ENCODE measurements at regions of chr7 and their contacts with region 1.

Region 1: DNA sequence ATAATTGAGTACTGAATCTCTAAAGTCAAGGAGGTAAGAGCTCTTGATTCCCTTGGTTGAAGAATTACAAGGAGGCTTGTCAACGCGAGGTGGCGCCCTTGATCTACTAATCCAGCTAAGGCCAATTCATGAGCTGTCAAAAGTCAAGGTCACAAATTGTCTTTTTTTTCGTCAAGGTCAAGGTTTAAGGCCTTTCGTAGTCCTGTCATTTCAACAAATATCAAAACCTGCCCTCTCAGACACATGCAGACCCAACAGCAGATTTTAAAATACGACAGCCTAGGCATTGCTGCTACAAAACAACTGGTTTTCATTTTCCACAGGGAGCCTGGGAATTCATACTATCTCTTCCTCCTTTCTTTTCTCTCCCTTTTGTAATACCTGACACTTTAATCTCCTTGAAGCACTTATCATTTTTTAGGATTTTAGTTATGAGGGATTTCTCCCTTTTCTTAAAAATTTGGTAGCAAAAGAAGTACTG is 3.6 kb downstream of the HOXA13 start:
- DNase-seq: peak; percentile 84
- H3K4me3 ChIP-seq: no peak overlapping the region
- H3K27ac ChIP-seq: no peak overlapping the region
- H3K4me1 ChIP-seq: peaks cover 16% of the 10 kb centered on the region
- H3K27me3 ChIP-seq: peaks cover 52 to 78% of the 10 kb centered on the region in 2 experiments
- CTCF ChIP-seq: peak; percentile 66 to 68
- POLR2A ChIP-seq: no peak

Region 2: GRCh38 chr7:27277619-27278018 is 81.3 kb after region 1 on chr7:
- CTCF ChIA-PET with region 1: no interaction called
- POLR2A ChIA-PET with region 1: no interaction called
- dilution Hi-C with region 1: no loop called
- intact Hi-C with region 1: no loop called
- DNase-seq: no peak
- H3K4me3 ChIP-seq: no peak overlapping the region
- H3K27ac ChIP-seq: no peak overlapping the region
- H3K4me1 ChIP-seq: no peaks in the 10 kb centered on the region
- H3K27me3 ChIP-seq: peaks cover 0 to 3% of the 10 kb centered on the region in 2 experiments
- CTCF ChIP-seq: no peak
- POLR2A ChIP-seq: no peak

Region 3: GRCh38 chr7:27303026-27303425 is 106.7 kb after region 1 on chr7:
- CTCF ChIA-PET with region 1: no interaction called
- POLR2A ChIA-PET with region 1: no interaction called
- dilution Hi-C with region 1: no loop called
- intact Hi-C with region 1: no loop called
- DNase-seq: no peak
- H3K4me3 ChIP-seq: no peak overlapping the region
- H3K27ac ChIP-seq: no peak overlapping the region
- H3K4me1 ChIP-seq: no peaks in the 10 kb centered on the region
- H3K27me3 ChIP-seq: peaks cover 0 to 1% of the 10 kb centered on the region in 2 experiments
- CTCF ChIP-seq: no peak
- POLR2A ChIP-seq: no peak

Region 4: GRCh38 chr7:27576360-27576944 is 380.1 kb after region 1 on chr7:
- CTCF ChIA-PET with region 1: interaction called, 27 read pairs
- POLR2A ChIA-PET with region 1: no interaction called
- dilution Hi-C with region 1: no loop called
- intact Hi-C with region 1: loop called (anchors 1 kb)
- DNase-seq: peak; percentile 70
- H3K4me3 ChIP-seq: no peak overlapping the region
- H3K27ac ChIP-seq: no peak overlapping the region
- H3K4me1 ChIP-seq: no peaks in the 10 kb centered on the region
- H3K27me3 ChIP-seq: no peaks in the 10 kb centered on the region
- CTCF ChIP-seq: peak; percentile 22 to 26
- POLR2A ChIP-seq: no peak

Region 5: GRCh38 chr7:27723085-27723484 is 526.8 kb after region 1 on chr7:
- CTCF ChIA-PET with region 1: interaction called, 17 read pairs
- POLR2A ChIA-PET with region 1: no interaction called
- dilution Hi-C with region 1: no loop called
- intact Hi-C with region 1: no loop called
- DNase-seq: peak; percentile 89
- H3K4me3 ChIP-seq: no peak overlapping the region
- H3K27ac ChIP-seq: no peak overlapping the region
- H3K4me1 ChIP-seq: no peaks in the 10 kb centered on the region
- H3K27me3 ChIP-seq: no peaks in the 10 kb centered on the region
- CTCF ChIP-seq: peak; percentile 28 to 37
- POLR2A ChIP-seq: no peak

Region 6: DNA sequence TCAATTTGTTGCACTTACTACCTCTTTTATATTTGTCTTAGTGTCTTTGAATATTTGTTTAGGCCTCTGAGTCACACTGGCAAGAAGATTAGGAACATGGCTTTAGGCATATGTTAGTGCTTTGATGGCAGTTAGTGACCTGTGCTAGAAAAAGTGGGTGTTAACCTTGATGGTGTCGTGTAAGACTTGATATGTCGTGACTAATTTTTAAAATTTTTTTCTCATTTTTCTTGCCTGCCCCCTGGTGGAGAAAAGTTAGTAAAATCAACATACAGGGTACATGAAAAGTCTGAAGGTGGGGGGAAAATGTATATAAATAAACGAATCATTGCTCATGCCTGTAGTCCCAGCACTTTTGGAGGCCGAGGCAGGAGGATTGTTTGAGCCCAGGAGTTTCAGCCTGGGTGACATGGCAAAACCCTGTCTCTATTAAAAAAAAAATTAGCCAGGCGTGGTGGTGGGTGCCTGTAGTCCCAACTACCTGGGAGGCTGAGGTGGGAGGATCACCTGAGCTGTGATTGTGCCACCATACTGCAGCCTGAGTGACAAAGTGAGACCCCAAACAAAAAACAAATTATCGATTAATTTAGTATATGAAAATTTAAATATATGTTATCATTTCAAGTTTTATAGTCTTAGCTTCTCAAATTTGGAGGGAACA is 588.2 kb after region 1 on chr7:
- CTCF ChIA-PET with region 1: interaction called, 16 read pairs
- POLR2A ChIA-PET with region 1: no interaction called
- dilution Hi-C with region 1: no loop called
- intact Hi-C with region 1: no loop called
- DNase-seq: peak; percentile 85
- H3K4me3 ChIP-seq: no peak overlapping the region
- H3K27ac ChIP-seq: no peak overlapping the region
- H3K4me1 ChIP-seq: peaks cover 11% of the 10 kb centered on the region
- H3K27me3 ChIP-seq: no peaks in the 10 kb centered on the region
- CTCF ChIP-seq: peak; percentile 48 to 52
- POLR2A ChIP-seq: no peak

Region 7: GRCh38 chr7:28020302-28020940 is 824.1 kb after region 1 on chr7:
- CTCF ChIA-PET with region 1: interaction called, 69 read pairs
- POLR2A ChIA-PET with region 1: no interaction called
- dilution Hi-C with region 1: no loop called
- intact Hi-C with region 1: loop called (anchors 1 kb)
- DNase-seq: peak; percentile 80
- H3K4me3 ChIP-seq: no peak overlapping the region
- H3K27ac ChIP-seq: no peak overlapping the region
- H3K4me1 ChIP-seq: no peaks in the 10 kb centered on the region
- H3K27me3 ChIP-seq: no peaks in the 10 kb centered on the region
- CTCF ChIP-seq: peak; percentile 70 to 75
- POLR2A ChIP-seq: no peak

Region 8: GRCh38 chr7:28096713-28097112 is 900.4 kb after region 1 on chr7:
- CTCF ChIA-PET with region 1: interaction called, 69 read pairs
- POLR2A ChIA-PET with region 1: no interaction called
- dilution Hi-C with region 1: no loop called
- intact Hi-C with region 1: loop called (anchors 1 kb)
- DNase-seq: peak; percentile 71
- H3K4me3 ChIP-seq: no peak overlapping the region
- H3K27ac ChIP-seq: no peak overlapping the region
- H3K4me1 ChIP-seq: no peaks in the 10 kb centered on the region
- H3K27me3 ChIP-seq: no peaks in the 10 kb centered on the region
- CTCF ChIP-seq: peak; percentile 71 to 77
- POLR2A ChIP-seq: no peak

Measured in endothelial cell of umbilical vein (primary cell).